Posterior vena cava (tissue), 2 donors: ENCODE measurements at regions of chr2 and their contacts with region 1.

Region 1: DNA sequence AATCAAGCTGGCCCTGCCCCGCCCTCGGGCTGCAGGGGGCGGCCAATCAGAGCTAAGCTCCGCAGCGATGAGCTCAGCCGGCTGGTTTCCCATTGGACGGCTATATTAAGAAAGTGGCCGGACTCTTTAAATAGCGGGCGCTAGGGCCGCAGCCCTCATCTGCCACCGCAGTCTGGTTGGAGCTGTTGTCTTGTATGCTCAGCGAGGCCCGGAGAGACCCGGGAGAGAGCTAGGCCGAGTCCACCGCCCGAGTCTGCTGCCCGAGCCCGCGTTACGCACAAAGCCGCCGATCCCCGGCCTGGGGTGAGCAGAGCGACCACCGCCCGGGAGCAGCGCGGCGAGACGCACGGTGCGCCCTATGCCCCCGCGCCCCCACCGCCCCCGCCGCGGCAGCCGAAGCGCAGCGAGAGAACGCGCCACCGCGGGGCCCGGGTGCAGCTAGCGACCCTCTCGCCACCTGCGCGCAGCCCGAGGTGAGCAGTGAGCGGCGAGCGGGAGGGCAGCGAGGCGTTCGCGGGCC is at the start of gene RHOB:
- DNase-seq: peak; percentile 99
- total RNA-seq, gene RHOB: 742 to 1,258 TPM

Region 2: GRCh38 chr2:20091305-20091991 is 355.5 kb before region 1 on chr2:
- intact Hi-C with region 1: no loop called
- DNase-seq: no peak

Region 3: DNA sequence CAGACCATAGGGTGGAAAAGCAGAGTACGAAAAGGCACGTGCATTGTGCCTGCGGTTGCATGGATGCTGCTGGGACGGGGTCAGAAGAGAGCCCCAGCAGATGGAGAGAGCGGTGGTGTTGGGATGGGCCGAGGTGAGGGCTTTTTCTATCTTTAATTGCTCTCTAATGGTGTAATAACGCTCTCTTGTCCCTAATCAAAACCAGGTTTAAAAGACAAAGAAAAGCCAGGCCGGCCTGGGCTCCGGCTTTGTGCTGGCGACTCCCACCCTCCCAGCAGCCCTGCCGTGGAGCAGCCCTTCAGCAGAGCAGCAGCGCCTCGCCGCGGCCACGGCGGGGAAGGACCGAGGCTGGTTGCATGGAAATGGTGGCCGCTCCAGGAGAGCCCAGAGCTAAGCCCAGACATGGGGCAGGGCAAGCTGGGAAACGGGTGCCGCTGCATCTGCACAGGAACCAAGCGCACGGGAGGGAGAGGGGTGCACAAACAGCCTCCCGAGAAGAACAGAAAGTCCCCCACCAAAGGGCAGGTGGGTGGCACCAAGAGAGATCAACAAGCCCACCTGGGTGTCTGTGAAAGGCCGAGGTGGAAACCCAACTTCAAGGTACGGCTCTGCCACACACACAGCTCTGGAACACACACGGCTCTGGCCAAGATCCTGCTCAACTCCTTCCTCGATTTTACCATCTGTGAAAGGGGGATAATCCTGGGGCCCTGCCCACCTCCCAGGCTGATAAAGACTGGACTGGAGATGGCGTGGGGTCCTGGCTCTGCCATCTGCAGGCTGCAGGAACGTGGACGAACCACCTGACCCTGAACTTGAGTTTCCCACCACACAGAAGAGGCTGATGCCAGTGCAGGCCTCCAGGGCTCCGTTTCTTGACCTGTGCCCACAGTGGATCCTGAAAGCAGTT is 189.0 kb after region 1 on chr2:
- intact Hi-C with region 1: loop called (anchors 2 to 5 kb)
- DNase-seq: peak; percentile 95